ENCODE measurements at regions of chr12 and their contacts with region 1.

Region 1: DNA sequence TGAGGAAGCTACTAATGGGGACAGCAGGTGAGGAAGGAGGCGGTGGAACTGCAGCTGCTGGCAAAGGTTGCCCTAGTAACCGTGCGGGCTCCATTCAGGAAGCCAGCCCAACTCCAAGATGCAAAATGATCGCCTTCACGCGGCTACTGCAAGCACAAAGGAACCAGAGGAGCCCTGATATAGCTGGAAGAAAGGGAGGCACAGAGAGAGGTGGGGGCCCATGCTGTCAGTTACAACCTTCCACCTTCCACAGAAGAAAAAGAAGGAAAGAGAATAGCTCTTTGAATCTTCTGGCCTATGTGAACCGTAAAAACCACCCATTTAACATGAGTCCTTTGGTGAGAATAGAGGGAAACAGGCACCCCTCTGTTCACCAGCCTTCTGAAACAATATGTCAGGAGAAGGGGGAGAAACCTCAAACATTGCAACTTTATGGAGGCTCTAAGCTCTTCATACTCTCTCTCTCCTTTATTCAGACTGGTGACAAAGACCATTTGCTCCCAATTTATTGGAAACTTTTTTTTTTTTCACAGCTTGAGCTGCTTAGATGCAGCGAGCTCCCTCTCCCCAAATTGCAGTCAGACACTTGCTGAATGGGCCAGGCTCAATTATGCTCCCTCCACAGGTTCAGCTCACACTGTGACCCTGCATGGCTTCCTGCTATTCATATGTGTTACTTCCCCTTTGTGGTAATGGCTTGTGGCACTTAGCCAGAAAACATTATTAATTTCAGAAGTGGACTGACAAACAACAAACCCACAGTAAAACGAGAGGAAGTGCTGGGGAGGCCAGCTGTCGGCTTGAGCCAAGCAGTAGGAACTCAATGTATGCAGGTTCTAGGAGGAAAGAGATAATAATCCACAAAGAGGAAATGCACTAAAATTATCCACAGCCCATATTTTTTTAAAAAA is 6.2 kb downstream of the DUSP6 start:
- DNase-seq: peak; percentile 51
- H3K4me3 ChIP-seq: no peak overlapping the region; a peak in 1 of 4 replicates
- H3K27ac ChIP-seq: peak overlapping the region; percentile 9 to 99; a peak in 3 of 4 replicates
- H3K4me1 ChIP-seq: peaks cover 22 to 43% of the 10 kb centered on the region in 2 experiments; a peak in 3 of 4 replicates
- H3K27me3 ChIP-seq: no peaks in the 10 kb centered on the region
- CTCF ChIP-seq: no peak
- EP300 ChIP-seq: peak in 1 of 2 experiments; percentile 63; a peak in 1 of 4 replicates
- RAD21 ChIP-seq: peak; percentile 27; the same call in 1 of the 2 replicates

Region 2: GRCh38 chr12:89247541-89247942 is 98.5 kb before region 1 on chr12:
- CTCF ChIA-PET with region 1: interaction called, 7 read pairs
- POLR2A ChIA-PET with region 1: interaction called, 15 read pairs
- DNase-seq: peak; percentile 22
- H3K4me3 ChIP-seq: no peak overlapping the region
- H3K27ac ChIP-seq: peak overlapping the region in 1 of 2 experiments; percentile 94; a peak in 2 of 4 replicates
- H3K4me1 ChIP-seq: peaks cover 0 to 34% of the 10 kb centered on the region in 2 experiments; a peak in 2 of 4 replicates
- H3K27me3 ChIP-seq: no peaks in the 10 kb centered on the region
- CTCF ChIP-seq: no peak
- EP300 ChIP-seq: peak in 1 of 2 experiments; percentile 85; a peak in 1 of 4 replicates
- RAD21 ChIP-seq: peak; percentile 19; the same call in 1 of the 2 replicates

Measured in SK-N-SH (cell line).